Endothelial cell of umbilical vein (primary cell): ENCODE measurements at regions of chr6 and their contacts with region 1.

Region 1: GRCh38 chr6:125191916-125192609 is 38.5 kb downstream of the TPD52L1 start:
- DNase-seq: peak; percentile 73
- H3K4me3 ChIP-seq: no peak overlapping the region
- H3K27ac ChIP-seq: no peak overlapping the region
- H3K4me1 ChIP-seq: no peaks in the 10 kb centered on the region
- H3K27me3 ChIP-seq: no peaks in the 10 kb centered on the region
- CTCF ChIP-seq: peak; percentile 70 to 76
- POLR2A ChIP-seq: no peak

Region 2: GRCh38 chr6:124434421-124434820 is 757.6 kb before region 1 on chr6:
- CTCF ChIA-PET with region 1: no interaction called
- POLR2A ChIA-PET with region 1: no interaction called
- dilution Hi-C with region 1: no loop called
- intact Hi-C with region 1: no loop called
- DNase-seq: no peak
- H3K4me3 ChIP-seq: no peak overlapping the region
- H3K27ac ChIP-seq: no peak overlapping the region
- H3K4me1 ChIP-seq: no peaks in the 10 kb centered on the region
- H3K27me3 ChIP-seq: no peaks in the 10 kb centered on the region
- CTCF ChIP-seq: no peak
- POLR2A ChIP-seq: no peak

Region 3: GRCh38 chr6:125213939-125214338 is 21.9 kb after region 1 on chr6:
- CTCF ChIA-PET with region 1: interaction called, 13 read pairs
- POLR2A ChIA-PET with region 1: interaction called, 3 read pairs
- dilution Hi-C with region 1: no loop called
- intact Hi-C with region 1: no loop called
- DNase-seq: no peak
- H3K4me3 ChIP-seq: no peak overlapping the region
- H3K27ac ChIP-seq: no peak overlapping the region
- H3K4me1 ChIP-seq: no peaks in the 10 kb centered on the region
- H3K27me3 ChIP-seq: no peaks in the 10 kb centered on the region
- CTCF ChIP-seq: no peak
- POLR2A ChIP-seq: no peak

Region 4: GRCh38 chr6:125301435-125302391 is 109.7 kb after region 1 on chr6 and contains the start of gene HDDC2:
- CTCF ChIA-PET with region 1: interaction called, 8 read pairs
- POLR2A ChIA-PET with region 1: no interaction called
- dilution Hi-C with region 1: no loop called
- intact Hi-C with region 1: loop called (anchors 2 kb)
- DNase-seq: peak; percentile 78
- H3K4me3 ChIP-seq: peak within 1 kb of the TSS; percentile 10 to 56 (median 47)
- H3K27ac ChIP-seq: peak within 1 kb of the TSS; percentile 72
- H3K4me1 ChIP-seq: peaks cover 10% of the 10 kb centered on the region
- H3K27me3 ChIP-seq: peaks cover 8 to 12% of the 10 kb centered on the region in 2 experiments
- CTCF ChIP-seq: no peak
- POLR2A ChIP-seq: peak; percentile 49
- total RNA-seq, gene HDDC2: 12.6 and 13.6 TPM in 2 replicates